Activated CD4-positive, alpha-beta T cell treated with anti-CD3 and anti-CD28 coated beads, Interleukin-2, amount 10 ng/mL, durations not matched to agents 24 days and 14 days (primary cell): ENCODE measurements at regions of chr5 and their contacts with region 1.

Region 1: GRCh38 chr5:67202828-67203227 is 6.2 kb upstream of the CD180 start:
- DNase-seq: no peak
- H3K4me3 Mint-ChIP-seq: peak overlapping the region; percentile 50
- H3K27ac Mint-ChIP-seq: peak overlapping the region; percentile 89
- H3K4me1 Mint-ChIP-seq: peaks cover 76% of the 10 kb centered on the region
- H3K27me3 Mint-ChIP-seq: no peaks in the 10 kb centered on the region

Region 2: GRCh38 chr5:67187006-67187715 is 15.7 kb before region 1 on chr5:
- intact Hi-C with region 1: loop called (anchors 2 kb)
- DNase-seq: no peak
- H3K4me3 Mint-ChIP-seq: peak overlapping the region; percentile 4
- H3K27ac Mint-ChIP-seq: peak overlapping the region; percentile 51
- H3K4me1 Mint-ChIP-seq: peaks cover 56% of the 10 kb centered on the region
- H3K27me3 Mint-ChIP-seq: no peaks in the 10 kb centered on the region

Region 3: GRCh38 chr5:67215583-67216471 is 13.0 kb after region 1 on chr5:
- intact Hi-C with region 1: no loop called
- DNase-seq: peak; percentile 93
- H3K4me3 Mint-ChIP-seq: peak overlapping the region; percentile 83
- H3K27ac Mint-ChIP-seq: peak overlapping the region; percentile 99
- H3K4me1 Mint-ChIP-seq: peaks cover 55% of the 10 kb centered on the region
- H3K27me3 Mint-ChIP-seq: no peaks in the 10 kb centered on the region